Naive thymus-derived CD4-positive, alpha-beta T cell (primary cell): ENCODE measurements at regions of chr10 and their contacts with region 1.

Region 1: GRCh38 chr10:124388823-124389612 is 29.7 kb downstream of the OAT start:
- DNase-seq: peak; percentile 80 to 98 (median 91)
- ATAC-seq: peak; percentile 99
- H3K4me3 ChIP-seq: peak overlapping the region; percentile 68
- H3K4me3 Mint-ChIP-seq: peak overlapping the region in 7 of 10 donors; percentile 25 to 71 (median 59)
- H3K27ac ChIP-seq: peak overlapping the region; percentile 62
- H3K27ac Mint-ChIP-seq: peak overlapping the region in 1 of 9 donors; percentile 49
- H3K4me1 ChIP-seq: peaks cover 4 to 5% of the 10 kb centered on the region in 2 donors
- H3K4me1 Mint-ChIP-seq: peaks cover 0 to 2% (median 0%) of the 10 kb centered on the region in 7 donors
- H3K27me3 ChIP-seq: no peaks in the 10 kb centered on the region
- H3K27me3 Mint-ChIP-seq: peaks cover 0 to 7% (median 5%) of the 10 kb centered on the region in 5 donors

Region 2: DNA sequence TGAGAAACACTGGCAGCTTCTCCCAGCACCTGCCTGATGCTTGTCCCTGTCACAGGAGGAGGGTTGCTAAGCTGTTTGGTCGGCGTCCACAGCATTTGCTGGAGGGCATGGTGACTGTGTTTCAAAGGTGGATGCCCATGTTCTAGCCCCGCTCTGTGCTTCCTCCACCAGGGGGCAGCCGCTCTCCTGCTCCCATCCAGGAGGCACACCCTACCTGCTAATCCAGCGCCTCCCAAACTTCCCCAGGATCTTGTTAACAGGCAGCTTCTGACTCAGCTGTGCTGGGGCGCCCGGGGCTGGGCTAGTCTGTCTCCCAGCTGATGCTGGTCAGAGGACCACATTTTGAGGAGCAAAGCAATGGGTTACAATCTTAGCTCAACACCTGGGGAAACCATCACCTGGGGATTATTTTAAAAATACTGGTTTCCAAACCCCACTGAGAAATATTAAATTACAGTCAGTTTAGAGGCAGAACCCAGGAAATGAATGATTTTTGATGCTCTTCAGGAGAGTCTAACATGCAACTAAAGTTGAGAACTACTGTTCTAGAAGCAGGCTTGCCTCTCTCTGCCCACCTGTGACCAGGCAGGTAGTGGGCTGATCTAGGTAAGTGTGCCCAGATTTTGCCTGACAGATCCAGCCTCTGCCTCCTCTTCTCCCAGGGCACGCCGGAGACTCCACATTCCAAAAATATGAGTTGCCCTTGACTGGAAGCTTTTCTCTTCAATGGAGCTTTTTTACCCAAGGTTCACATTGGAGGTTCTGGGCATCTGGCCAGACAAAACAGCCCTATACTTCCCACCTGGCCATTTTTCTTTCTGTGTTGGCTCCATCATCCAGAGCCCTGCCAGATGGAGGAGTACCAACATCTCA is 815.5 kb before region 1 on chr10:
- CTCF ChIA-PET with region 1: interaction called, 3 read pairs
- POLR2A ChIA-PET with region 1: no interaction called
- intact Hi-C with region 1: loop called in 1 of 2 experiments (anchors 1 kb)
- DNase-seq: peak in 5 of 9 donors; percentile 8 to 31 (median 12)
- ATAC-seq: peak; percentile 32
- H3K4me3 ChIP-seq: no peak overlapping the region
- H3K4me3 Mint-ChIP-seq: no peak overlapping the region
- H3K27ac ChIP-seq: no peak overlapping the region
- H3K27ac Mint-ChIP-seq: no peak overlapping the region
- H3K4me1 ChIP-seq: no peaks in the 10 kb centered on the region
- H3K4me1 Mint-ChIP-seq: peaks cover 0 to 4% (median 0%) of the 10 kb centered on the region in 7 donors
- H3K27me3 ChIP-seq: no peaks in the 10 kb centered on the region
- H3K27me3 Mint-ChIP-seq: peaks cover 0 to 54% (median 33%) of the 10 kb centered on the region in 5 donors

Region 3: DNA sequence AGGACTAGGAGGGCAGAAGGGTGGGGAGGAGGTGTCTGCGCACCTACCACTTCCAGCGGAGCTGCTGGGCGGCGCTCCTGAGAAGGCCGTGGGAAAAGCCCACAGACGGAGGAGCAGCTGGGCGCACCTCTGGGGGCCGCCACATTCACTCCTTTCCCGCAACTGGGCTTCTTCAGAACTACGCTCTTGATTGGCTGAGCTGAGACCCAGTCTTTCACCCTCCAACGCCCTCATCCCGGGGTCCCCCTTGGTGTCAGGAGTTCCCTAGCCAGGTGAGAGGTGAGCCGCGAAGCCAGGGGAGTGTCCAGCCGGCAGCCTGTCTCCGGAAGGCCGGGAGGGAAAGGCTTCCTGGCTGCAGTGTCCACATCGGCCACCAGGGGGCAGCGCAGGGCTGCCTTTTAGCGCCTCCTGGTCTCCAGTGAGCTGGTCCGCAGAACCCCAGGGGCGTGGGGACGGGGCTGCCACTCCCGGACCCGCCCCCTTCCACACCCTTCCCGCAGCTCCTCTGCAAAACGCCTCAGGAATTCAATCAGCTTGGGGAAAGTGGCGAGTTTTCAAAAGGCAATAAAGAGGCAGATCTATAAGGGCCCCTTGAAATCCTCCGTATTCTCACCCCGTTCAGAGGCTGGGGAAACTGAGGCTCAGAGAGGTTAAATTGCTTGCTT is 394.5 kb before region 1 on chr10:
- CTCF ChIA-PET with region 1: interaction called, 91 read pairs
- POLR2A ChIA-PET with region 1: interaction called, 3 read pairs
- intact Hi-C with region 1: loop called (anchors 1 kb)
- DNase-seq: peak; percentile 58 to 88 (median 76)
- ATAC-seq: peak; percentile 76
- H3K4me3 ChIP-seq: peak overlapping the region; percentile 32
- H3K4me3 Mint-ChIP-seq: peak overlapping the region; percentile 52 to 82 (median 62)
- H3K27ac ChIP-seq: no peak overlapping the region
- H3K27ac Mint-ChIP-seq: no peak overlapping the region
- H3K4me1 ChIP-seq: peaks cover 9% of the 10 kb centered on the region in 2 donors
- H3K4me1 Mint-ChIP-seq: peaks cover 7 to 20% (median 13%) of the 10 kb centered on the region in 7 donors
- H3K27me3 ChIP-seq: peaks cover 0 to 17% of the 10 kb centered on the region in 2 donors
- H3K27me3 Mint-ChIP-seq: peaks cover 48 to 73% (median 58%) of the 10 kb centered on the region in 5 donors

Region 4: GRCh38 chr10:124231168-124232155 is 157.6 kb before region 1 on chr10:
- CTCF ChIA-PET with region 1: no interaction called
- POLR2A ChIA-PET with region 1: no interaction called
- intact Hi-C with region 1: loop called in 1 of 2 experiments (anchors 10 kb)
- DNase-seq: peak; percentile 14 to 88 (median 70)
- ATAC-seq: peak; percentile 67
- H3K4me3 ChIP-seq: no peak overlapping the region
- H3K4me3 Mint-ChIP-seq: peak overlapping the region in 6 of 10 donors; percentile 19 to 73 (median 52)
- H3K27ac ChIP-seq: no peak overlapping the region
- H3K27ac Mint-ChIP-seq: peak overlapping the region; percentile 22 to 97 (median 83)
- H3K4me1 ChIP-seq: no peaks in the 10 kb centered on the region
- H3K4me1 Mint-ChIP-seq: peaks cover 0 to 13% (median 0%) of the 10 kb centered on the region in 7 donors
- H3K27me3 ChIP-seq: no peaks in the 10 kb centered on the region
- H3K27me3 Mint-ChIP-seq: peaks cover 0 to 19% (median 0%) of the 10 kb centered on the region in 5 donors

Region 5: GRCh38 chr10:124403548-124403947 is 14.5 kb after region 1 on chr10:
- CTCF ChIA-PET with region 1: interaction called, 8 read pairs
- POLR2A ChIA-PET with region 1: interaction called, 3 read pairs
- intact Hi-C with region 1: loop called (anchors 1 kb)
- DNase-seq: peak in 7 of 9 donors; percentile 49 to 74 (median 67)
- ATAC-seq: peak; percentile 100
- H3K4me3 ChIP-seq: no peak overlapping the region
- H3K4me3 Mint-ChIP-seq: peak overlapping the region in 1 of 10 donors; percentile 38
- H3K27ac ChIP-seq: no peak overlapping the region
- H3K27ac Mint-ChIP-seq: peak overlapping the region; percentile 28 to 95 (median 75)
- H3K4me1 ChIP-seq: peaks cover 0 to 10% of the 10 kb centered on the region in 2 donors
- H3K4me1 Mint-ChIP-seq: peaks cover 8 to 11% (median 10%) of the 10 kb centered on the region in 7 donors
- H3K27me3 ChIP-seq: no peaks in the 10 kb centered on the region
- H3K27me3 Mint-ChIP-seq: no peaks in the 10 kb centered on the region

Region 6: DNA sequence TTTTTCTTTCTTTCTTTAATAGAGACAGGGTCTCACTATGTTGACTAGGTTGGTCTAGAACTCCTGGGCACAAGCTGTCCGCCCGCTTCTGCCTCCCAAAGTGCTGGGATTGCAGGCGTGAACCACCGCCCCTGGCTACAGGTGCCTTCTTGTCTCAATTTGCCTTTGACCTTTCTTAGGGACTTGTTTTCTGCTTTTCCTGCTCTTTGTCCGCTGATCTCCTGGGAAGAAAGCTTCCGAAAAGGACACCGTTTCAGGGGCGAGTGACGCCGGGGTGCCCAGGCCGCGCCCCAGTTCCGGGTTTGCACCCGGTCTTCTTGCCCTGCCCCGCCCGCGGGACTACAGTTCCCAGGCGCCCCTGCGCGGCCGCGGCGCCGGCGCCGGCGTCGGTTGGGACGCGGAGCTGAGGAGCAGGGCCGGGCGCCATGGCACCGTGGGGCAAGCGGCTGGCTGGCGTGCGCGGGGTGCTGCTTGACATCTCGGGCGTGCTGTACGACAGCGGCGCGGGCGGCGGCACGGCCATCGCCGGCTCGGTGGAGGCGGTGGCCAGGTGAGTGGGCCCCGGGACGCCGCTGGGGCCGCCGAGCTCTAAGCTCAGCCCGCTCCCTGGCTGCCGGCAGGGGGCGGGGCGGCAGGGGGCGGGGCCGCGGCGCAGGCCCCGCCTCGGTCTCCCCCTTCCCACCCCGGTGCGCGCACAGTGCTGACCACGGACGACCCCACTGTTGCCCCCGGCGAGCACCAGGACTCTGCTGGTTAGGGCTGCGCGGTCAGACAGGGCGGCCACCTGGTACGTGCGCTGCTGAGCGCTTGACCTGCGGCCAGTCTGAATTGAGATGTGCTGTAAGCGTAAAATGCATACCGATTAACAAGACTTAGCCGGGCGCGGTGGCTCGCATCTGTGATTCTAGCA is 72.7 kb after region 1 on chr10 and contains the start of gene LHPP:
- CTCF ChIA-PET with region 1: no interaction called
- POLR2A ChIA-PET with region 1: no interaction called
- intact Hi-C with region 1: loop called in 1 of 2 experiments (anchors 1 kb)
- DNase-seq: peak; percentile 77 to 91 (median 87)
- ATAC-seq: peak; percentile 98
- H3K4me3 ChIP-seq: peak within 1 kb of the TSS; percentile 76
- H3K4me3 Mint-ChIP-seq: peak within 1 kb of the TSS; percentile 69 to 96 (median 90)
- H3K27ac ChIP-seq: peak within 1 kb of the TSS; percentile 76
- H3K27ac Mint-ChIP-seq: peak within 1 kb of the TSS; percentile 82 to 98 (median 96)
- H3K4me1 ChIP-seq: peaks cover 13 to 21% of the 10 kb centered on the region in 2 donors
- H3K4me1 Mint-ChIP-seq: peaks cover 23 to 35% (median 28%) of the 10 kb centered on the region in 7 donors
- H3K27me3 ChIP-seq: no peaks in the 10 kb centered on the region
- H3K27me3 Mint-ChIP-seq: peaks cover 0 to 17% (median 11%) of the 10 kb centered on the region in 5 donors
- total RNA-seq, gene LHPP: 19.8 to 31.2 (median 27.6) TPM

Region 7: GRCh38 chr10:124486635-124487034 is 97.6 kb after region 1 on chr10:
- CTCF ChIA-PET with region 1: no interaction called
- POLR2A ChIA-PET with region 1: no interaction called
- intact Hi-C with region 1: no loop called
- DNase-seq: no peak
- ATAC-seq: no peak
- H3K4me3 ChIP-seq: no peak overlapping the region
- H3K4me3 Mint-ChIP-seq: no peak overlapping the region
- H3K27ac ChIP-seq: no peak overlapping the region
- H3K27ac Mint-ChIP-seq: no peak overlapping the region
- H3K4me1 ChIP-seq: no peaks in the 10 kb centered on the region
- H3K4me1 Mint-ChIP-seq: peaks cover 0 to 6% (median 1%) of the 10 kb centered on the region in 7 donors
- H3K27me3 ChIP-seq: no peaks in the 10 kb centered on the region
- H3K27me3 Mint-ChIP-seq: no peaks in the 10 kb centered on the region

Region 8: DNA sequence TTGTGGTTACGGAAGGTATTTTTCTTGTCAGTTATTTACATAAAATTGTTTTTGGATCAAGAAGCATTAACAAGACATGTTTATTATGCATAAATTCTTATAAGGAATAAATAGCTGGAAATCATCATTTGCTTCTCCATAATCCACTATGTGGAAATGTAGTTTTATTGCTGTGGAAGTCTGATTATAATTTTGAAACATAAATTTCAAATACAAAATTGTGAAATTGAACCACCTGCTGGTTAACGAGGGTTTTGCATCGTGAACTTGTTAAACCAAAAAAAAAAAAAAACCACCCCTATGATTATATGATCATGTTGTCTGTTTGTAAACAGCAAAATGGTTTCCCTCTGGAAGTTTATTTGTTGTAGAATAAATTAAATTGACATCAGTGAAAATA is 438.5 kb after region 1 on chr10:
- CTCF ChIA-PET with region 1: no interaction called
- POLR2A ChIA-PET with region 1: no interaction called
- intact Hi-C with region 1: no loop called
- DNase-seq: peak in 5 of 9 donors; percentile 4 to 21 (median 8)
- ATAC-seq: no peak
- H3K4me3 ChIP-seq: no peak overlapping the region
- H3K4me3 Mint-ChIP-seq: no peak overlapping the region
- H3K27ac ChIP-seq: no peak overlapping the region
- H3K27ac Mint-ChIP-seq: no peak overlapping the region
- H3K4me1 ChIP-seq: no peaks in the 10 kb centered on the region
- H3K4me1 Mint-ChIP-seq: no peaks in the 10 kb centered on the region
- H3K27me3 ChIP-seq: no peaks in the 10 kb centered on the region
- H3K27me3 Mint-ChIP-seq: no peaks in the 10 kb centered on the region